ENCODE measurements at regions of chr13 and their contacts with region 1.

Region 1: DNA sequence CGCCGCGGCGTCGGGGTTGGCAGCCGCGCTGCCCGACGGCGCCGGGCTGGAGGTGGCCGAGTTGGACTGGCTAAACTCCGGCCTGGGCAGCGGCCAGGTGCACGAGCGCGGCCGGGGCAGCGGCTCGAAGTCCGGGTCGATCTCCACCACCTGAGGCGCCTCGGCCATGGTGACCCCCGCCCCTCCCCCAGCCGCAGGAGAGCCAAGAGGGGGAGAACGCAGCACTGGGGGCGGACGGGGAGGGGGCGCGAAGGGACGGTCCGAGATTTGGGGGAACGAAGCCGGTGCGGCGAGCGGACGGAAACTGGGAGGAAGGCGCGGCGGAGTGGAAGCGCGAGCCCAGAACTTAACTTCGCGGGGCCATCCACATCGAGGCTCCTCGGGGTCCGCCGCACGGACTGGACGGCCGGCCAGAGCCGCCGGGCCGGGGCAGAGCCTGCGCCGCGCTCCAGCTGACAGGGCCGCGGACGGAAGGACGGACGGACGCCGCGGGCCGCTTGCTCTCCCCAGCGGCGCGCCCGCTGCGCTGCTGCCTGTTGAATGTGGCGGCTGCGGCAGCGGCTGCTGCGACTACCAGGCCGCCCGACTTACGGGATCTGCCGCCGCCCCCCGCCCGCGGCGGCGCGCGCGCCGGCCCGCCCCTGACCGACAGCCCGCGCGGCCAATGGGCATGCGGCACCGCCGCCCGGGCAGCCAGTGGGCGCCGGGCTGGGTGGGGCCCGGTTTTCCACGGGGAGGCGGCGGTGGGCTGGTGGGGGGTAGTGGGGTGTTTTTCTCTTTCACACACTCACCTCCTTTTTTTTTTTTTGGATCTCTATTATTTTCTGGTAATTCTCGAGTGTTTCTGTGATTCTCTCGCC is at the start of gene FOXO1:
- DNase-seq: peak; percentile 87
- H3K4me3 Mint-ChIP-seq: peak within 1 kb of the TSS; percentile 86
- H3K27ac Mint-ChIP-seq: peak within 1 kb of the TSS; percentile 93
- H3K4me1 Mint-ChIP-seq: peaks cover 33% of the 10 kb centered on the region
- H3K27me3 Mint-ChIP-seq: no peaks in the 10 kb centered on the region
- total RNA-seq, gene FOXO1: 38.2 and 38.3 TPM in 2 replicates

Region 2: DNA sequence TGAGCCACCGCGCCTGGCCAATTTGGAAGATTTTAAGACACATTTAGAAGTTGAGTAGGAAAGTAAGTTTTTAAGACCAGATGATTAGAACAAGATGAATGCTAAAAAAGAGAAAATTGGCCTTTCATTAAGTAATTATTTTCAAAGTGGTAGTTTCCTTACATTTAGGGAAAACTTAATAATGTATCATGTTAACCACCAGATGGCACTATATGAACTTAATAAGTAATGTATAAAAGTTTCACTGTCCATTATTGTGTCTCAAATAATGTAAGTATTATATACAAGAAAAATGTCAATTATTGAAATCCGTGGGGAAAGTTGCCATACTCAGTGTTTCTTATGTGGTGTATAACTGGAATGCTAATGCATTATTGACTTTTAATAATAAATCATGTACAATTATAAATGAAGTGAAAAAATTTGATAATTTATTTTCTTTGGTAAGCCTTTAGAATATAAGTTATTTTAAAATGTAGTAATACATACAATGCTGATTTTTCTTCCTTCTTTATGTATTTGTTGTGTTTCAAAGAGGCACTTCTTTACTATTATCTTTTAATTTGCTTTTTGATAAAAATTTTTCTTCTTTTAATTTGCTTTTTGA is 981.6 kb before region 1 on chr13:
- intact Hi-C with region 1: loop called (anchors 5 kb)
- DNase-seq: no peak
- H3K4me3 Mint-ChIP-seq: no peak overlapping the region
- H3K27ac Mint-ChIP-seq: no peak overlapping the region
- H3K4me1 Mint-ChIP-seq: peaks cover 27% of the 10 kb centered on the region
- H3K27me3 Mint-ChIP-seq: no peaks in the 10 kb centered on the region

Region 3: DNA sequence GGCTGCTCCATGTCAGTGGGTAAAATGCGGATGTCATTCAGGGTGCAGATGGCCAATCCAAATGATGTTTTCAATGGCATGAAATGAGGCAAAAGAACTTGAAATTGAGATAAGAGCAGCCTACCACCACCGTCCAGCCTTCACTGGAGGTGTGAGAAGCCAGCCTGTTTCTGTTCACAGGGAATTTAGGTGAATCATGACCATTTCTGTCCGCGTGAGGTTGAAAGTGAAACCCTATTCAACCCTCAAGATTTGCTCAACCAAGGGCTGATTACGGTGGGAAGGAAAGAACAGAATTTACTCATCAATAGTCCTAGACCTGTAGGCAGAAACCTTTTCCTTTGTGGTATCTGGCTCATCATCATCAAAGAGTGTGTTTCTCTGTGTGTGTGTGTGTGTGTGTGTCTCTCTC is 640.1 kb before region 1 on chr13:
- intact Hi-C with region 1: loop called (anchors 2 kb)
- DNase-seq: peak; percentile 64
- H3K4me3 Mint-ChIP-seq: no peak overlapping the region
- H3K27ac Mint-ChIP-seq: peak overlapping the region; percentile 55
- H3K4me1 Mint-ChIP-seq: peaks cover 42% of the 10 kb centered on the region
- H3K27me3 Mint-ChIP-seq: no peaks in the 10 kb centered on the region

Region 4: GRCh38 chr13:40190641-40191100 is 475.6 kb before region 1 on chr13:
- intact Hi-C with region 1: loop called (anchors 1 kb)
- DNase-seq: peak; percentile 55
- H3K4me3 Mint-ChIP-seq: peak overlapping the region; percentile 31
- H3K27ac Mint-ChIP-seq: peak overlapping the region; percentile 79
- H3K4me1 Mint-ChIP-seq: peaks cover 59% of the 10 kb centered on the region
- H3K27me3 Mint-ChIP-seq: peaks cover 2% of the 10 kb centered on the region

Region 5: GRCh38 chr13:40208517-40208916 is 457.8 kb before region 1 on chr13:
- intact Hi-C with region 1: no loop called
- DNase-seq: no peak
- H3K4me3 Mint-ChIP-seq: no peak overlapping the region
- H3K27ac Mint-ChIP-seq: no peak overlapping the region
- H3K4me1 Mint-ChIP-seq: peaks cover 22% of the 10 kb centered on the region
- H3K27me3 Mint-ChIP-seq: no peaks in the 10 kb centered on the region

Region 6: DNA sequence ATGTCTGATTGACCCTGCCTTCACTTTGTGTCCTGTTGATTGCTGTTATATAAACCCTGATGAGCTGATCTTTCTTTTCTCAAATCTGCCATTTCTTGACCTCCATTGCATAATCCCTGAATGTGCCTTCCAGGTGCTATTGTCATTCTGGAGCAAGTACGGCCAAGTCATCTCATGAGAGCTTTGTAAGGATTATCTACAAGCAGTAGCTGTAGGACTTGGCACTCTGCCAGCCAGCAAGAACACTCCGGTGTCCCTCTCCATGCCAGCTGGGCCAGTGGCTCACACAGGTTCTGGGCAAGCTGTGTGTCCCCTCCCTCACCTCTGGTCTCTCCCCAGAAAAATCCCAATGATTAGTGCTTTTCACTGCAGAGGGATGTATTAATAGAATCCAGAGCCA is 347.9 kb before region 1 on chr13:
- intact Hi-C with region 1: loop called (anchors 5 kb)
- DNase-seq: no peak
- H3K4me3 Mint-ChIP-seq: no peak overlapping the region
- H3K27ac Mint-ChIP-seq: no peak overlapping the region
- H3K4me1 Mint-ChIP-seq: peaks cover 54% of the 10 kb centered on the region
- H3K27me3 Mint-ChIP-seq: no peaks in the 10 kb centered on the region

Region 7: DNA sequence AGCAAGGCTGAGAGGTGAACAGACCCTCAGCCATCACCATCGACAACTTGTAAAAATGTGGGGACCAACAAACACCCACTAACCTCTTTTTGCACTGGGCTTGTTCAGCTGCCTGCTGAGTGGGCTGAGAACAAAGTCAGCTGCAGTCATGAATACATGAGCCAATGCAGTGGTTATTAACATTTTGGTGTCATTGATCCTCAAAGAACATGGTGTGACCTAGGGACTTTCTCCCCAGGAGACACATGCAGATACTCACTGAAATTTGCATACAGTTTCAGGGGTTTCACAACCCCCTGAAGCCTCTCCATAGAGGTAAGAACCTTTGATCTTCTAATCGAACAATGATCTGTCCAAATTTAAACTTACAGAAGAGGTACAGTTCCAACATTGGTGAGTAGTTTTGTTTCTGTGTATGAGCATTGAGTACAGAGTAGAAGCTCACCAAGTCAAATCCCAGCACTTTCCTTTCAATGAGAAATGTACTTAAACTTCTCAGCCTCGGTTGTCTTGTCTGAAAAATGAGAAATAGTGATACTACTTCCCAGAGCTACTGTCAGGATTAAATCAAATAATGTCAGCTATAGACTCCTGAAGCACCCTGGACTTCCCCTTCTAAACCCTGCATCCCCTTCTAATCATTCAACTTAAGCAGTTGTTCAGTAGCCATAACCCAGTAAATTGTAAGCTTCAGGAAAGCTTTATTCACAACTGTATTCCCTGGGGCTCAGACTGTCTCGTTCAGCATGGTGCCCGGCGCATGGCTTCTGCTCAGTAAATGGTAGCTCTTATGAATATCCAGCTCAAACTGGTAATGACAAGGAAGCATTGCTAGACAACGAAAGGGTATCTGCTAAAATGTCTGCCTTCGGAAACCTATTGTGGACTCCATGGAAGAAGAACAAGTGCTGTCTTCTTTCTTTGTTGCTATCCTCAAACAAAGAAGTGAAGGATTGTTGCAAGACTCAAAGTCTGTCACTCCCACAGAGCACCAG is 148.5 kb before region 1 on chr13:
- intact Hi-C with region 1: loop called (anchors 1 kb)
- DNase-seq: no peak
- H3K4me3 Mint-ChIP-seq: peak overlapping the region; percentile 42
- H3K27ac Mint-ChIP-seq: peak overlapping the region; percentile 81
- H3K4me1 Mint-ChIP-seq: peaks cover 57% of the 10 kb centered on the region
- H3K27me3 Mint-ChIP-seq: no peaks in the 10 kb centered on the region

Region 8: GRCh38 chr13:40653527-40654318 is 12.6 kb before region 1 on chr13:
- intact Hi-C with region 1: loop called (anchors 1 kb)
- DNase-seq: no peak
- H3K4me3 Mint-ChIP-seq: peak overlapping the region; percentile 65
- H3K27ac Mint-ChIP-seq: peak overlapping the region; percentile 93
- H3K4me1 Mint-ChIP-seq: peaks cover 71% of the 10 kb centered on the region
- H3K27me3 Mint-ChIP-seq: no peaks in the 10 kb centered on the region